Activated T-helper 2 cell treated with anti-CD3 and anti-CD28 coated beads, Interferon-gamma antibody, Interleukin-2, Interleukin-4, amounts not matched to agents 10 μg/mL and 5 μg/mL and 100 μg/mL, durations not matched to agents 14 hours and 24 hours and 36 hours (primary cell): ENCODE measurements at regions of chr17 and their contacts with region 1.

Region 1: GRCh38 chr17:77957857-77958715 is at the start of gene TNRC6C:
- DNase-seq: peak; percentile 99
- H3K4me3 Mint-ChIP-seq: peak within 1 kb of the TSS; percentile 90
- H3K27ac Mint-ChIP-seq: peak within 1 kb of the TSS; percentile 76
- H3K4me1 Mint-ChIP-seq: peaks cover 35% of the 10 kb centered on the region
- H3K27me3 Mint-ChIP-seq: peaks cover 39% of the 10 kb centered on the region
- total RNA-seq, gene TNRC6C: 18.4 and 25.0 TPM in 2 replicates

Region 2: DNA sequence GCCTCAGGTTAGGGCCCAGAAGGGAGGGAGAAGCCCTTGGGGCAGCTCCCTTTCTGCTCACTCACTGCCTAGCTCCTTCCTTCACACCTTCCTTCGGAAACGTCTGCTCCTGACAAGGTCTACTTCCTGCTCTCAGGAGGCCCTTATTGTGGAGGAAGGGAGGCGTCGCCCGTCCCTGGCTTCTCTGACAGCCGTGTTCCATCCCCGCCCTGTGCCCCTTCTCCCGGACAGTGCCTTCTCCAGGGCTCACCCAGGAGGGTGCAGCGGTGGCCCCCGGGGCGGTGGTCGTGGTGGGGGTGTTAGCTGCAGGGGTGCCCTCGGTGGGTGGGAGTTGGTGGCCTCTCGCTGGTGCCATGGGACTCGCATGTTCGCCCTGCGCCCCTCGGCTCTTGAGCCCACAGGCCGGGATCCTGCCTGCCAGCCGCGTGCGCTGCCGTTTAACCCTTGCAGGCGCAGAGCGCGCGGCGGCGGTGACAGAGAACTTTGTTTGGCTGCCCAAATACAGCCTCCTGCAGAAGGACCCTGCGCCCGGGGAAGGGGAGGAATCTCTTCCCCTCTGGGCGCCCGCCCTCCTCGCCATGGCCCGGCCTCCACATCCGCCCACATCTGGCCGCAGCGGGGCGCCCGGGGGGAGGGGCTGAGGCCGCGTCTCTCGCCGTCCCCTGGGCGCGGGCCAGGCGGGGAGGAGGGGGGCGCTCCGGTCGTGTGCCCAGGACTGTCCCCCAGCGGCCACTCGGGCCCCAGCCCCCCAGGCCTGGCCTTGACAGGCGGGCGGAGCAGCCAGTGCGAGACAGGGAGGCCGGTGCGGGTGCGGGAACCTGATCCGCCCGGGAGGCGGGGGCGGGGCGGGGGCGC is 585.4 kb before region 1 on chr17:
- intact Hi-C with region 1: loop called (anchors 10 kb)
- DNase-seq: peak; percentile 77
- H3K4me3 Mint-ChIP-seq: peak overlapping the region; percentile 75
- H3K27ac Mint-ChIP-seq: peak overlapping the region; percentile 75
- H3K4me1 Mint-ChIP-seq: peaks cover 44% of the 10 kb centered on the region
- H3K27me3 Mint-ChIP-seq: no peaks in the 10 kb centered on the region

Region 3: DNA sequence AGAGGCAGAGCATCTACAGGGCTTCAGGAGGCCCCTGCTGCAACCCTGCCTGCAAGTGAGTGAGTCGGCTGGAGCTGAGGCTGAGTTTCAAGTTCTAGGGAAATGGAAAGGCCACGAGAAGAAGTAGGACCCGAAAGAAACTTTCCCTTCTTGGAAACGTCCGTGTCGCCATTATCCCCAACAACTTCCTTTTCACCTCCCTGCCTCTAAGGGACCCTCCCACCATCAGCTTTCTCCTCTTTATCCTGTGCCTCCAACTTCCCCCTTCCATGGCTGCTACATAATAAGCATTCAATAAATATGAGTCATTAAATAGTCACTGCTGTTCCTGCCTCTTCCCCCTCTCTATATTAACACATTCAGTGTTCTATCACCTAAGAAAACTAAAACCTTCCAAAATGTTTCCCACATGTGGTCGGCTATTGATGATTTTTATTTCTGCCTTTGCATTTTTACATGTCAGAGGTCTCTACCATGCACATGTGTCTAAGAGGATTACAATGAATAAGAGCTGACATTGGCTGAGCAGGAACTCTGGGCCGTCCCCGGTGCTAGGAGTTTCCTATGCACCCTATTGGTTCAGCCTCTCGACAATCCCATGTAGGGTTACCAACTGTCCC is 115.4 kb before region 1 on chr17:
- intact Hi-C with region 1: loop called (anchors 2 kb)
- DNase-seq: no peak
- H3K4me3 Mint-ChIP-seq: peak overlapping the region; percentile 2
- H3K27ac Mint-ChIP-seq: peak overlapping the region; percentile 76
- H3K4me1 Mint-ChIP-seq: peaks cover 44% of the 10 kb centered on the region
- H3K27me3 Mint-ChIP-seq: no peaks in the 10 kb centered on the region

Region 4: GRCh38 chr17:77881545-77881944 is 76.5 kb before region 1 on chr17:
- intact Hi-C with region 1: loop called (anchors 2 kb)
- DNase-seq: peak; percentile 81
- H3K4me3 Mint-ChIP-seq: peak overlapping the region; percentile 77
- H3K27ac Mint-ChIP-seq: peak overlapping the region; percentile 93
- H3K4me1 Mint-ChIP-seq: peaks cover 42% of the 10 kb centered on the region
- H3K27me3 Mint-ChIP-seq: peaks cover 6% of the 10 kb centered on the region